Sigmoid colon (tissue), 7 donors: ENCODE measurements at regions of chr15 and their contacts with region 1.

Region 1: DNA sequence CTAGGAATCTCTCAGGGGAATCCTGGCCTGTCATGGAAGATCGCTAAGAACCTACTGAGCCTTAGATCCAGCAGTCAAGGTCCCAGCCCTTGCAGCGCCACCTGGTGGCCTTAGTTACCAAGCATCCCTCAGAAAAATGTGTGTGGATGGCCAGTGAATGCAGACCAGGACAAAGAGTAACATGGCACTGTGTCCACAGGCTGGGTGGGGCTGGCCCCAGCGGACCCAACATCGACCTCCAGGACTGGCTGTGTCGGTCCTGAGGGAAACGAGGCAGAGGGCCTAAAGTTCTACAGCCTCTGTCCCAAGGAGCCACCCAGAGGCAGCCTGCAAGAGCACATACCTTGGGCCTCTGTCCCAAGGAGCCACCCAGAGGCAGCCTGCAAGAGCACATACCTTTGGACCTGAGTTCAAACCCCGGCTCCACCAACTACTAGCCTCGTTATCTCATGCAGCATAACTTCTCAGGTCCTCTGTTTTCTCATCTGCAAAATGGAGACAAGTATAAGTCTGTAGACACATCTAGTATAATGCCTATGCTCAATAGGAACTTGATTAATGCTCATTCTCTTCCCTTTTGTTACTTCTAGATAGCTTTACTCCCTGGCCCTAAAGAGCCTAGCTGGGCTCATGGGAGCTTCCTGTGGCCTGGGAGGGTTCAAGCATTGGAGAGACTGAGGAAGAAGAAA is 57.5 kb upstream of the HERC1 start:
- DNase-seq: peak; percentile 87
- H3K4me3 ChIP-seq: no peak overlapping the region
- H3K27ac ChIP-seq: no peak overlapping the region
- H3K4me1 ChIP-seq: no peaks in the 10 kb centered on the region
- H3K27me3 ChIP-seq: no peaks in the 10 kb centered on the region
- CTCF ChIP-seq: peak; percentile 37 to 86 (median 76)
- EP300 ChIP-seq: no peak
- POLR2A ChIP-seq: no peak

Region 2: GRCh38 chr15:63663906-63664305 is 227.3 kb before region 1 on chr15:
- intact Hi-C with region 1: no loop called
- DNase-seq: no peak
- H3K4me3 ChIP-seq: no peak overlapping the region
- H3K27ac ChIP-seq: no peak overlapping the region
- H3K4me1 ChIP-seq: no peaks in the 10 kb centered on the region
- H3K27me3 ChIP-seq: no peaks in the 10 kb centered on the region
- CTCF ChIP-seq: no peak
- EP300 ChIP-seq: no peak
- POLR2A ChIP-seq: no peak

Region 3: GRCh38 chr15:63833021-63833696 is 58.1 kb before region 1 on chr15:
- intact Hi-C with region 1: loop called (anchors 5 kb)
- DNase-seq: peak; percentile 73
- H3K4me3 ChIP-seq: peak overlapping the region; percentile 61 to 90 (median 76)
- H3K27ac ChIP-seq: peak overlapping the region; percentile 90 to 94 (median 90)
- H3K4me1 ChIP-seq: peaks cover 0 to 54% (median 36%) of the 10 kb centered on the region in 4 donors
- H3K27me3 ChIP-seq: no peaks in the 10 kb centered on the region
- CTCF ChIP-seq: no peak
- EP300 ChIP-seq: no peak
- POLR2A ChIP-seq: no peak

Region 4: DNA sequence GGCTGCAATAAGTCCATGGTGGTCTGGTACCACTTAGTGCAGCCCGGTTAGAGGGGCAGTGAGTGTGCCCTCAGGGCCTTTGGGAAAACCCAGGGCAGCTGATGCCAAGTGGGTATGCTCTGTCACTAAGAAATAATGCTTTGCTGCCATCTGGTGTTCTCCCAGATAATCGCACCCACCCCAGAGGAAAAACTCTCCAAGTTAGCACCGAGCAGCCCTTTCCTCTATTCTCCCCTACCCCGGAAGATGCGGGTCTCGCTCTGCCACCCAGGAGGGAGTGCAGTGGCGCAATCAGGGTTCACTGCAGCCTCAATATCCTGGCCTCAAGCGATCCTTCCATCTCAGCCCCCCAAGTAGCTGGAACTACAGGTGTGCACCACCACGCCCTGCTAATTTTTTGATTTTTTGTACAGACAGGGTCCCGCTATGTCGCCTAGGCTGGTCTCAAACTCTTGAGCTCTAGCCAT is 176.4 kb after region 1 on chr15:
- intact Hi-C with region 1: loop called (anchors 10 kb)
- DNase-seq: peak; percentile 73
- H3K4me3 ChIP-seq: peak overlapping the region in 1 of 4 donors; percentile 5
- H3K27ac ChIP-seq: no peak overlapping the region
- H3K4me1 ChIP-seq: peaks cover 0 to 39% (median 32%) of the 10 kb centered on the region in 4 donors
- H3K27me3 ChIP-seq: no peaks in the 10 kb centered on the region
- CTCF ChIP-seq: peak; percentile 66 to 89 (median 78)
- EP300 ChIP-seq: no peak
- POLR2A ChIP-seq: no peak